Activated B cell treated with CpG ODN at 0.5 μM for 24 hours (primary cell): ENCODE measurements at regions of chr12 and their contacts with region 1.

Region 1: DNA sequence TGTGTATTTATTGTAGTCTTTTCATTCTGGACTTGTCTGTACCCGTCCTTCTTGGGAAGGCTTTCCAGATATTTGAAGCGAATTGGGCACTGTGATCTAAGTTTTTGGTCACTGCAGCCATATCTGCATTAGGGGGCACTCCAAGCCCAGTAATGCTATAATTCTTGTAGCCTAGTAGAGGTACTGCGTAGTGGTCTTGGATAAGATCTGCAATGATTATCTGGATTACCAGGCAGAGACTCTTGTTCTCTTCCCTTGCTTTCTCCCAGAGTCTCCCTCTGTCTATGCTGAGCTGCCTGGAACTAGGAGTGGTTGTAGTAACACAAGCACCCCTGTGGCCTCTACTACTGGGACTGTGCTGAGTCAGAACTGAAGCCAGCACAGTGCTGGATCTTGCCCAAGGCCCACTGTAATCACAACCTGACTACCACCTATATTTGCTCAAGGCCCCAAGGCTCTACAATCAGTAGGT is 30.0 kb downstream of the SLC38A2 start:
- DNase-seq: no peak
- ATAC-seq: peak; percentile 56
- H3K4me3 Mint-ChIP-seq: no peak overlapping the region
- H3K27ac Mint-ChIP-seq: no peak overlapping the region
- H3K4me1 Mint-ChIP-seq: peaks cover 2% of the 10 kb centered on the region
- H3K27me3 Mint-ChIP-seq: peaks cover 5% of the 10 kb centered on the region
- CTCF ChIP-seq: no peak

Region 2: DNA sequence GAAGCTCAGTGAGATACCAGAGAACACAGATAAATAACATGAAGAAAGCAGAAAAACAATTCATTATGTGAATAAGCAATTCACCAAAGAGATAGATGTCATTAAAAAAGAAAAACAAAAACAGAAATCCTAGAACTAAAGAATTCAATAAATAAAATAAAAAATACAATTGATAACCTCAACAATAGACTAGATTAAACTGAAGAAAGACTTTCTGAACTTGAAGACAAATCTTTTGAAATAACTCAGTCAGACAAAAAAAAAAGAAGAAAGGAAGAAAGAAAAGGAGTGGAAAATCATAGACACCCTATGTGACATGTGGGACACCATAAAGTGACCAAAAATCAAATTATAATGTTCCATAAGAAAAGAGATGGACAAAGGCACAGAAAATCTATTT is 59.8 kb before region 1 on chr12:
- CTCF ChIA-PET with region 1: no interaction called
- POLR2A ChIA-PET with region 1: no interaction called
- intact Hi-C with region 1: no loop called
- DNase-seq: no peak
- ATAC-seq: no peak
- H3K4me3 Mint-ChIP-seq: no peak overlapping the region
- H3K27ac Mint-ChIP-seq: no peak overlapping the region
- H3K4me1 Mint-ChIP-seq: no peaks in the 10 kb centered on the region
- H3K27me3 Mint-ChIP-seq: no peaks in the 10 kb centered on the region
- CTCF ChIP-seq: no peak

Region 3: DNA sequence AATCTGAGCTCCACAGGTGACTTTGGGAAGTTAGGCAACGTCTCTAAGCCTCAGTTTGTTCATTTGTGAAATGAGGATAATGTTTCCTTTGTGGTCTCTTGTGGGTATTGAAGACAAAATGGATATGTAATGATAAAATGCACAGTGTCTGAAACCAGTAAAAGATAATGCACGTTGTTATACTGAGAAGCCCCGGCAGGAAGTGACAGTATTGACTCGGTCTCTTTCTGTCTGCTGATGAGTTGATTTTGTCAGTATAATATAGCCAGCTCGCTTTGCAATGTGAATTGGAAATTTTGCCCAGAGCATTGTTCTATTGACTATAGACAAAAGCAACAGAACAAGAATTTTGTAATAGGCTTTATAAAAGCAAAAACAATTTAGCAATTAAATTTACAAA is 24.6 kb before region 1 on chr12:
- CTCF ChIA-PET with region 1: no interaction called
- POLR2A ChIA-PET with region 1: no interaction called
- intact Hi-C with region 1: no loop called
- DNase-seq: no peak
- ATAC-seq: no peak
- H3K4me3 Mint-ChIP-seq: no peak overlapping the region
- H3K27ac Mint-ChIP-seq: no peak overlapping the region
- H3K4me1 Mint-ChIP-seq: no peaks in the 10 kb centered on the region
- H3K27me3 Mint-ChIP-seq: peaks cover 5% of the 10 kb centered on the region
- CTCF ChIP-seq: no peak

Region 4: GRCh38 chr12:46933947-46934346 is 591.3 kb after region 1 on chr12:
- CTCF ChIA-PET with region 1: no interaction called
- POLR2A ChIA-PET with region 1: interaction called, 3 read pairs
- intact Hi-C with region 1: loop called (anchors 1 kb)
- DNase-seq: no peak
- ATAC-seq: no peak
- H3K4me3 Mint-ChIP-seq: no peak overlapping the region
- H3K27ac Mint-ChIP-seq: no peak overlapping the region
- H3K4me1 Mint-ChIP-seq: no peaks in the 10 kb centered on the region
- H3K27me3 Mint-ChIP-seq: peaks cover 17% of the 10 kb centered on the region
- CTCF ChIP-seq: no peak

Region 5: GRCh38 chr12:47021298-47021697 is 678.7 kb after region 1 on chr12:
- CTCF ChIA-PET with region 1: interaction called, 15 read pairs
- POLR2A ChIA-PET with region 1: no interaction called
- intact Hi-C with region 1: loop called (anchors 1 kb)
- DNase-seq: no peak
- ATAC-seq: no peak
- H3K4me3 Mint-ChIP-seq: no peak overlapping the region
- H3K27ac Mint-ChIP-seq: no peak overlapping the region
- H3K4me1 Mint-ChIP-seq: no peaks in the 10 kb centered on the region
- H3K27me3 Mint-ChIP-seq: peaks cover 3% of the 10 kb centered on the region
- CTCF ChIP-seq: peak; percentile 52